Naive thymus-derived CD4-positive, alpha-beta T cell (primary cell): ENCODE measurements at regions of chr18 and their contacts with region 1.

Region 1: DNA sequence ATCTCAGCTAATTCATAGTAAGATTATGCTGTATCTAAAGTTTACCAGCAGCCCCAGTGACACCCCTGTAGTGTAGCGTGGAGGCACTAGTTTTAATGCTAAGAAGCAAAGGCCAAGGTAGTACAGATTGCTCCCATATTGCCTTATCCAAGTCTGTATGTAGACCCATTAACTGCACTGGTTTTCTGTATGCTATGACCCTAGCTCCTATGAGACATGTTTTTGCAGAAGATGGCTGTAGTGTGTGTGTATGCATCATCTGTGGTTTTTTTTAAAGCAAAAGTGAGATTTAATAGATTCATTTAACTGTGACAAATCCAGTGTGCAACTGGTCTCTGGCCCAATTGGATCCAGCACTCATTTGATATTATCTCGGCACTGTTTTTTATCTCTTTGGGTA is 86.5 kb downstream of the HAUS1 start:
- DNase-seq: no peak
- ATAC-seq: no peak
- H3K4me3 ChIP-seq: no peak overlapping the region
- H3K4me3 Mint-ChIP-seq: peak overlapping the region in 1 of 10 donors; percentile 9
- H3K27ac ChIP-seq: no peak overlapping the region
- H3K27ac Mint-ChIP-seq: peak overlapping the region in 5 of 9 donors; percentile 1 to 43 (median 21)
- H3K4me1 ChIP-seq: peaks cover 0 to 9% of the 10 kb centered on the region in 2 donors
- H3K4me1 Mint-ChIP-seq: peaks cover 8 to 47% (median 39%) of the 10 kb centered on the region in 7 donors
- H3K27me3 ChIP-seq: no peaks in the 10 kb centered on the region
- H3K27me3 Mint-ChIP-seq: no peaks in the 10 kb centered on the region

Region 2: GRCh38 chr18:46207985-46208384 is 17.3 kb after region 1 on chr18:
- CTCF ChIA-PET with region 1: no interaction called
- POLR2A ChIA-PET with region 1: no interaction called
- intact Hi-C with region 1: loop called in 1 of 2 experiments (anchors 2 kb)
- DNase-seq: no peak
- ATAC-seq: no peak
- H3K4me3 ChIP-seq: no peak overlapping the region
- H3K4me3 Mint-ChIP-seq: peak overlapping the region in 3 of 10 donors; percentile 4 to 29 (median 6)
- H3K27ac ChIP-seq: no peak overlapping the region
- H3K27ac Mint-ChIP-seq: peak overlapping the region in 7 of 9 donors; percentile 7 to 81 (median 53)
- H3K4me1 ChIP-seq: peaks cover 24 to 59% of the 10 kb centered on the region in 2 donors
- H3K4me1 Mint-ChIP-seq: peaks cover 61 to 97% (median 86%) of the 10 kb centered on the region in 7 donors
- H3K27me3 ChIP-seq: no peaks in the 10 kb centered on the region
- H3K27me3 Mint-ChIP-seq: no peaks in the 10 kb centered on the region

Region 3: GRCh38 chr18:46315187-46315586 is 124.5 kb after region 1 on chr18:
- CTCF ChIA-PET with region 1: no interaction called
- POLR2A ChIA-PET with region 1: no interaction called
- intact Hi-C with region 1: no loop called
- DNase-seq: no peak
- ATAC-seq: peak; percentile 26
- H3K4me3 ChIP-seq: no peak overlapping the region
- H3K4me3 Mint-ChIP-seq: no peak overlapping the region
- H3K27ac ChIP-seq: no peak overlapping the region
- H3K27ac Mint-ChIP-seq: no peak overlapping the region
- H3K4me1 ChIP-seq: no peaks in the 10 kb centered on the region
- H3K4me1 Mint-ChIP-seq: peaks cover 0 to 4% (median 0%) of the 10 kb centered on the region in 7 donors
- H3K27me3 ChIP-seq: no peaks in the 10 kb centered on the region
- H3K27me3 Mint-ChIP-seq: peaks cover 0 to 7% (median 0%) of the 10 kb centered on the region in 5 donors